ENCODE measurements at regions of chr5 and their contacts with region 1.

Region 1: DNA sequence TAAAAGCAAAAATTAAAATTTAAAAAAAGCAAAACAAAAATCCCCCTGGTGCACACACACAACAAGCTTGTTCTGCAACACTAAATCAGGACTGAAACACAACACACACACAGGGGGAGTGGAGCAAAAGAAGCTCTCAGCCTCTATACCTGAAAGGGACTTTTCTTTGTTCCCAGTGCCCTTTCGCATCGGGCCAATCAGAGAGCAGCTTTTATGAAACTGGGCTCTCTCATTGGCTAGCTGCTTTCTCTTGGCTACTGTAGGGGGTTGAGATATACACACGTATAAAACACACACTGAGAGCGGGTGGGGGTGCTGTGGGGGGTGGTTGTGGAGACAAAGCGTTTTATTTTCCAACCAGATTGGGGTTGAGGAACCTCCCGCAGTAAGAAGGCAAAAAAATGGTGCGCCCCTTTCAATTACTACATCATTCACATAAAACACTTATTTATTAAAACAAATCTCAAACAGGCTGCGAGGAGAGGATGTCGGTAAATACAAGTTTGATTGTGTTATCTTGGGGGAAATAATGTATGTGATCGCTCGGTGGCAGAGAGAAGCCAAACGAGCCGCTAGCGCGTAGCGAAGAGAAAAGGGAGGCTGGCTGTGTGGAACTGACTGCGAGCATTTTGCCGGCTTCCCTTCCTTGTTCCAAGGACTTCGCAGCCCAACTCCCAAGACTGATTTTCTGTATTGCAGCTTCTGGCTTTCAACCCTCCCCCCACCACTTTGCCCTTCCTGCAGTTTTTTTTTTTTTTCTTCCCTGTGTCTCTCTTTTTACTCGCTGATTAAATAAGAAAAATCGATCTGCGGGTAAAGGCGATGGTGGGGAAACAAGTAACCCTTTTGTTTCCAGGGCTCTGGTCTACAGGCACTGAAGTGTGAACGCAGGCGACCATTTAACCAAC is 2.5 kb upstream of the ZNF608 start:
- DNase-seq: peak; percentile 89 to 95
- H3K4me3 ChIP-seq: peak overlapping the region; percentile 62
- H3K4me3 Mint-ChIP-seq: no peak overlapping the region
- H3K27ac Mint-ChIP-seq: peak overlapping the region; percentile 93
- H3K4me1 ChIP-seq: peaks cover 48% of the 10 kb centered on the region
- H3K4me1 Mint-ChIP-seq: peaks cover 12% of the 10 kb centered on the region
- H3K27me3 ChIP-seq: no peaks in the 10 kb centered on the region
- H3K27me3 Mint-ChIP-seq: no peaks in the 10 kb centered on the region
- CTCF ChIP-seq: no peak

Region 2: GRCh38 chr5:124599028-124599973 is 149.6 kb before region 1 on chr5:
- CTCF ChIA-PET with region 1: no interaction called
- POLR2A ChIA-PET with region 1: no interaction called
- intact Hi-C with region 1: loop called (anchors 5 kb)
- DNase-seq: peak; percentile 55 to 59
- H3K4me3 ChIP-seq: no peak overlapping the region
- H3K4me3 Mint-ChIP-seq: no peak overlapping the region
- H3K27ac Mint-ChIP-seq: no peak overlapping the region
- H3K4me1 ChIP-seq: peaks cover 29% of the 10 kb centered on the region
- H3K4me1 Mint-ChIP-seq: peaks cover 13% of the 10 kb centered on the region
- H3K27me3 ChIP-seq: no peaks in the 10 kb centered on the region
- H3K27me3 Mint-ChIP-seq: no peaks in the 10 kb centered on the region
- CTCF ChIP-seq: no peak

Region 3: DNA sequence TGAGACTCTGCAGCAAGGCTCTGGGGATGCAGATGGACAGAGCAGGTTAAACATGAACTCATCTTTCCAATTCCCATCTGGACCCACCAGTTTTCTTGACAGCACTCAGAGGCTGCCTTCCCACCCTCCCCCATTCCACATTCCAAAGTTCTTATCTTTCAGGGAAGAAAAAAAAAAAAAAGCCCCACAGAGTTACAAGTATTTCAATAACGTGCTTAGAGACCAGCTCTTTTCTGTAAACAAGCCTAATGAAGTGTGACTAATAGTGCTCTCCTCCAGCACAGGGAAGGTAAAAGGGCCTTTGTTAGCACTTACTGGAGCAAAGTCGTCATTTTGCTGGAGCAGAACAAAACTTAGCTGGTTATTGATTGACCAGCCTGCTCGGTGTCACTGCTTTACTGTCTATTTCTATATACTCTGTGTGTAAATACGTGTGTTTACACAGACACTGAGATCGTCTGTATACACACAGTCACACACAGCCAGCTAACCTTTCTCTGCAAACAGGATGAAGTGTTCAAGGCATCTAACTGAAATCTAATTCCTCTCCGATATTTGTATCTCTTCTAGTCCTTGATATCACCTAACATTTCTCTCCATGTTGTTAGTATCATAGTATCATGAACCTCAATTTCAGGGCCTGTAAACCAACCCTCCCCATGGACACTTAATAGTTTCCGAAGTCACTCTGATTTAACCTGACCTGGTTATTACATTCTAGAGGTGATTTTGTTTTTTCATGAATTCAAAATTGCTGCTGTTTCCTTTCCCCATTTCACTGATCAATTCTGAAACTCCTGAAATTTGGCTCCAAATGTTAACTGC is 87.4 kb before region 1 on chr5:
- CTCF ChIA-PET with region 1: interaction called, 3 read pairs
- POLR2A ChIA-PET with region 1: interaction called, 8 read pairs
- intact Hi-C with region 1: loop called (anchors 1 kb)
- DNase-seq: peak; percentile 86 to 91
- H3K4me3 ChIP-seq: no peak overlapping the region
- H3K4me3 Mint-ChIP-seq: peak overlapping the region; percentile 65
- H3K27ac Mint-ChIP-seq: peak overlapping the region; percentile 96
- H3K4me1 ChIP-seq: peaks cover 76% of the 10 kb centered on the region
- H3K4me1 Mint-ChIP-seq: peaks cover 19% of the 10 kb centered on the region
- H3K27me3 ChIP-seq: no peaks in the 10 kb centered on the region
- H3K27me3 Mint-ChIP-seq: no peaks in the 10 kb centered on the region
- CTCF ChIP-seq: no peak

Region 4: GRCh38 chr5:124902097-124902821 is 153.3 kb after region 1 on chr5:
- CTCF ChIA-PET with region 1: no interaction called
- POLR2A ChIA-PET with region 1: no interaction called
- intact Hi-C with region 1: loop called (anchors 5 kb)
- DNase-seq: no peak
- H3K4me3 ChIP-seq: no peak overlapping the region
- H3K4me3 Mint-ChIP-seq: no peak overlapping the region
- H3K27ac Mint-ChIP-seq: no peak overlapping the region
- H3K4me1 ChIP-seq: peaks cover 14% of the 10 kb centered on the region
- H3K4me1 Mint-ChIP-seq: peaks cover 9% of the 10 kb centered on the region
- H3K27me3 ChIP-seq: no peaks in the 10 kb centered on the region
- H3K27me3 Mint-ChIP-seq: no peaks in the 10 kb centered on the region
- CTCF ChIP-seq: no peak

Region 5: GRCh38 chr5:126300293-126300692 is 1551.4 kb after region 1 on chr5:
- CTCF ChIA-PET with region 1: no interaction called
- POLR2A ChIA-PET with region 1: interaction called, 18 read pairs
- intact Hi-C with region 1: no loop called
- DNase-seq: no peak
- H3K4me3 ChIP-seq: no peak overlapping the region
- H3K4me3 Mint-ChIP-seq: no peak overlapping the region
- H3K27ac Mint-ChIP-seq: no peak overlapping the region
- H3K4me1 ChIP-seq: no peaks in the 10 kb centered on the region
- H3K4me1 Mint-ChIP-seq: no peaks in the 10 kb centered on the region
- H3K27me3 ChIP-seq: no peaks in the 10 kb centered on the region
- H3K27me3 Mint-ChIP-seq: no peaks in the 10 kb centered on the region
- CTCF ChIP-seq: no peak

Measured in Caco-2 (cell line).